B cell (primary cell): ENCODE measurements at regions of chr19 and their contacts with region 1.

Region 1: GRCh38 chr19:49097455-49098288 is 12.4 kb downstream of the SNRNP70 start:
- DNase-seq: peak; percentile 84
- ATAC-seq: peak; percentile 95
- H3K4me3 ChIP-seq: no peak overlapping the region
- H3K4me3 Mint-ChIP-seq: no peak overlapping the region
- H3K27ac ChIP-seq: no peak overlapping the region
- H3K27ac Mint-ChIP-seq: no peak overlapping the region
- H3K4me1 ChIP-seq: no peaks in the 10 kb centered on the region
- H3K4me1 Mint-ChIP-seq: peaks cover 4% of the 10 kb centered on the region
- H3K27me3 ChIP-seq: no peaks in the 10 kb centered on the region
- H3K27me3 Mint-ChIP-seq: no peaks in the 10 kb centered on the region
- CTCF ChIP-seq: peak; percentile 99

Region 2: GRCh38 chr19:48950159-48950558 is 147.5 kb before region 1 on chr19:
- CTCF ChIA-PET with region 1: no interaction called
- POLR2A ChIA-PET with region 1: no interaction called
- intact Hi-C with region 1: no loop called
- DNase-seq: no peak
- ATAC-seq: no peak
- H3K4me3 ChIP-seq: no peak overlapping the region
- H3K4me3 Mint-ChIP-seq: no peak overlapping the region
- H3K27ac ChIP-seq: no peak overlapping the region
- H3K27ac Mint-ChIP-seq: no peak overlapping the region
- H3K4me1 ChIP-seq: peaks cover under 1 to 8% of the 10 kb centered on the region in 2 donors
- H3K4me1 Mint-ChIP-seq: peaks cover 5% of the 10 kb centered on the region
- H3K27me3 ChIP-seq: no peaks in the 10 kb centered on the region
- H3K27me3 Mint-ChIP-seq: no peaks in the 10 kb centered on the region
- CTCF ChIP-seq: no peak

Region 3: GRCh38 chr19:48965040-48965805 is 132.4 kb before region 1 on chr19 and contains the start of gene FTL:
- CTCF ChIA-PET with region 1: no interaction called
- POLR2A ChIA-PET with region 1: no interaction called
- intact Hi-C with region 1: no loop called
- DNase-seq: peak; percentile 96
- ATAC-seq: peak; percentile 83
- H3K4me3 ChIP-seq: peak within 1 kb of the TSS; percentile 73 to 90 (median 84)
- H3K4me3 Mint-ChIP-seq: peak within 1 kb of the TSS; percentile 100
- H3K27ac ChIP-seq: peak within 1 kb of the TSS; percentile 75 to 84
- H3K27ac Mint-ChIP-seq: peak within 1 kb of the TSS; percentile 99
- H3K4me1 ChIP-seq: peaks cover 41 to 57% of the 10 kb centered on the region in 2 donors
- H3K4me1 Mint-ChIP-seq: peaks cover 70% of the 10 kb centered on the region
- H3K27me3 ChIP-seq: no peaks in the 10 kb centered on the region
- H3K27me3 Mint-ChIP-seq: no peaks in the 10 kb centered on the region
- CTCF ChIP-seq: no peak
- total RNA-seq, gene FTL: 881 and 937 TPM in 2 replicates

Region 4: DNA sequence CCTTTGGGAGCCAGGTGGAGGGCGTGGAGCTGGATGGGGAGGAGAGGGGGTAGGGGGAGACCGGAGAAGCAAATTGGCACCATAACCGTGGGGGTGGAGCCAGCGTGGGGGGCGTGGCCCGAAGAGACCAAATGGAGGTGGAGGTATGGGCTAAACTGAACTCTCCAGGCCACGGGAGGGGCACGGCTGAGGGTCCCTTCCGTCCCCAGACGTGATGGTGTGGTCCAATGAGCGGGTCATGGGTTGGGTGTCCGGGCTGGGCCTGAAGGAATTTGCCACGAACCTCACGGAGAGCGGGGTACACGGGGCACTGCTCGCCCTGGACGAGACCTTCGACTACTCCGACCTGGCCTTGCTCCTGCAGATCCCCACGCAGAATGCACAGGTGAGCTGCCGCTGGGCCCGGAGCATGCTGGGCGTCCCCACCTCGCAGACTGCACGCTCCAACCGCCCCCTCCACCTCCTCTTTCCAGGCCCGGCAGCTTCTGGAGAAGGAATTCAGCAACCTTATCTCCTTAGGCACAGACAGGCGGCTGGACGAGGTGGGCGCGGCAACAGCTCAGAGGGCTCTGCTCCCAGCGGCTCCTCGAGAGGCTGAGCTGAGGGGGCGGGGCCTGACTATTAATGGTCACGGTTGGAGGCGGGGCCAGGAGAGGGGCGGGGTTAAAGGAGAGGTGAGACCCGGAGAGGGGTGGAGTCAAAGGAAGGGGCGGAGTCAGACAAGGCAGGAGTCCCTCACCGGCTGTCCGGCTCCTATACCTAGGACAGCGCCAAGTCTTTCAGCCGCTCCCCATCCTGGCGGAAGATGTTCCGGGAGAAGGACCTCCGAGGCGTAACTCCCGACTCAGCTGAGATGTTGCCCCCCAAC is 51.3 kb after region 1 on chr19:
- CTCF ChIA-PET with region 1: interaction called, 44 read pairs
- POLR2A ChIA-PET with region 1: no interaction called
- intact Hi-C with region 1: loop called (anchors 1 kb)
- DNase-seq: peak; percentile 82
- ATAC-seq: peak; percentile 53
- H3K4me3 ChIP-seq: peak overlapping the region in 4 of 5 experiments; percentile 57 to 76 (median 61)
- H3K4me3 Mint-ChIP-seq: peak overlapping the region; percentile 89
- H3K27ac ChIP-seq: no peak overlapping the region
- H3K27ac Mint-ChIP-seq: no peak overlapping the region
- H3K4me1 ChIP-seq: peaks cover 44 to 48% of the 10 kb centered on the region in 2 donors
- H3K4me1 Mint-ChIP-seq: peaks cover 42% of the 10 kb centered on the region
- H3K27me3 ChIP-seq: peaks cover 0 to 81% (median 38%) of the 10 kb centered on the region in 4 experiments
- H3K27me3 Mint-ChIP-seq: peaks cover 57% of the 10 kb centered on the region
- CTCF ChIP-seq: no peak

Region 5: DNA sequence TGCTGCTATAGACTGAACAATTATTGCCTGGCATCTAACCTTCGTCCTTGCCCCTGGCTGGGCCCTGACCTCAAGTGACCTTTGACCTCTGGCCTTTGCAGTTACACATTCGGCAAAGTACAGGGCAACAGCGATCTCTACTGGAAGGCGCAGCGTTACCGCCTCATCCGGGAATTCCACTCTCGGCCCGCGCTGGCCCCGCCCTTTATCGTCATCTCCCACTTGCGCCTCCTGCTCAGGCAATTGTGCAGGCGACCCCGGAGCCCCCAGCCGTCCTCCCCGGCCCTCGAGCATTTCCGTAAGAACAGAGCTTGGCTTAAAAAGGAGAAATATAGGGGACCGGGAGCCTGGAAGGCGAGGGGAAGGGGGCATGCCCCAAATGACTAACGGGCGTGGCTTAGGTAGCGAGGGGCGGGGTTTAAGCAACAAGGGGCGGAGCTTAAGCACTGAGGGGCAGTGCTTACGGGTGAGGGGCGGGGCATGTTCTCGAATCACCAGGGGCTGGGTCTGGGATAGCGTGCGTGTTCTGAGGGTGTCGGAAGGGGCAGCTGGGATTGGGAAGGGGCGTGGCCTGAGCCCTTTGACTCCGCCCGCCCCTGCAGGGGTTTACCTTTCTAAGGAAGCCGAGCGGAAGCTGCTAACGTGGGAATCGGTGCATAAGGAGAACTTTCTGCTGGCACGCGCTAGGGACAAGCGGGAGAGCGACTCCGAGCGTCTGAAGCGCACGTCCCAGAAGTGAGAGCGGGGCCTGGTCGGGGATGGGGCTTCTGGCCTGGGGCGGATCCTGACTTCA is 112.6 kb after region 1 on chr19:
- CTCF ChIA-PET with region 1: interaction called, 89 read pairs
- POLR2A ChIA-PET with region 1: no interaction called
- intact Hi-C with region 1: loop called (anchors 1 kb)
- DNase-seq: peak; percentile 62
- ATAC-seq: peak; percentile 67
- H3K4me3 ChIP-seq: no peak overlapping the region
- H3K4me3 Mint-ChIP-seq: peak overlapping the region; percentile 18
- H3K27ac ChIP-seq: no peak overlapping the region
- H3K27ac Mint-ChIP-seq: peak overlapping the region; percentile 61
- H3K4me1 ChIP-seq: peaks cover 12 to 37% of the 10 kb centered on the region in 2 donors
- H3K4me1 Mint-ChIP-seq: peaks cover 41% of the 10 kb centered on the region
- H3K27me3 ChIP-seq: no peaks in the 10 kb centered on the region
- H3K27me3 Mint-ChIP-seq: no peaks in the 10 kb centered on the region
- CTCF ChIP-seq: no peak